ENCODE measurements at regions of chr13 and their contacts with region 1.

Region 1: GRCh38 chr13:99200432-99201167 is at the start of gene UBAC2:
- DNase-seq: peak; percentile 95
- H3K4me3 ChIP-seq: peak within 1 kb of the TSS; percentile 72 to 98 (median 82)
- H3K27ac ChIP-seq: peak within 1 kb of the TSS; percentile 94 to 99 (median 96)
- H3K4me1 ChIP-seq: peaks cover 24 to 39% (median 32%) of the 10 kb centered on the region in 4 donors
- H3K27me3 ChIP-seq: peaks cover 0 to 3% (median 0%) of the 10 kb centered on the region in 4 donors
- CTCF ChIP-seq: peak in 1 of 3 experiments; percentile 17
- EP300 ChIP-seq: no peak
- POLR2A ChIP-seq: peak; percentile 86
- total RNA-seq, gene UBAC2: 42.6 to 62.1 (median 50.9) TPM

Region 2: DNA sequence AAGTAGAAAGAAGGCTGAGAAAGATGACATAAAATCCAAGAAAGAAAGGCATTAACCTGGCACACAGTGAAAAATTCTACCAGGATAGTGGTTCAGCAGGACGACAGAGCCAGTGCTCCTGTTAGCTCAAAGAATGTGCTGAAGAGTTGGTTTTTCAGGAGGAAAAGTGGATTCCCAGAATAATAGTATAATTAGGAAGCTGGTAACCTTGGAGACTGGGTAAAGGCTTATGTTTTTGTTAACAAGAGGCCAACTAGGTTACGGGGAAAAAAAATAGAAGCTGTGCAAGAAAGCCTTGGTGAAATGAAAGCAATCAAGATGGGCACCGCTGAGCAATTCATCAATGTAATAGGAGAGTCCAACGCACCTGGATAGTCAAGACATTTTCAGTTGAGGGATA is 502.8 kb before region 1 on chr13:
- intact Hi-C with region 1: no loop called
- DNase-seq: no peak
- H3K4me3 ChIP-seq: no peak overlapping the region
- H3K27ac ChIP-seq: no peak overlapping the region
- H3K4me1 ChIP-seq: no peaks in the 10 kb centered on the region
- H3K27me3 ChIP-seq: peaks cover 0 to 8% (median 0%) of the 10 kb centered on the region in 4 donors
- CTCF ChIP-seq: no peak
- EP300 ChIP-seq: no peak
- POLR2A ChIP-seq: no peak

Region 3: GRCh38 chr13:98839856-98840769 is 360.5 kb before region 1 on chr13:
- intact Hi-C with region 1: no loop called
- DNase-seq: no peak
- H3K4me3 ChIP-seq: no peak overlapping the region
- H3K27ac ChIP-seq: no peak overlapping the region
- H3K4me1 ChIP-seq: peaks cover 10 to 24% (median 23%) of the 10 kb centered on the region in 4 donors
- H3K27me3 ChIP-seq: no peaks in the 10 kb centered on the region
- CTCF ChIP-seq: peak; percentile 72 to 90 (median 76)
- EP300 ChIP-seq: no peak
- POLR2A ChIP-seq: no peak

Region 4: GRCh38 chr13:99087096-99087953 is 113.3 kb before region 1 on chr13:
- intact Hi-C with region 1: loop called (anchors 5 kb)
- DNase-seq: peak; percentile 97
- H3K4me3 ChIP-seq: peak overlapping the region; percentile 71 to 95 (median 86)
- H3K27ac ChIP-seq: peak overlapping the region; percentile 96 to 99 (median 98)
- H3K4me1 ChIP-seq: peaks cover 7 to 35% (median 34%) of the 10 kb centered on the region in 4 donors
- H3K27me3 ChIP-seq: no peaks in the 10 kb centered on the region
- CTCF ChIP-seq: peak; percentile 4 to 43 (median 29)
- EP300 ChIP-seq: no peak
- POLR2A ChIP-seq: peak; percentile 58